ENCODE measurements at regions of chr17 and their contacts with region 1.

Region 1: GRCh38 chr17:80147035-80147836 is at the start of gene EIF4A3:
- DNase-seq: peak in 1 of 2 donors; percentile 99
- H3K4me3 ChIP-seq: peak within 1 kb of the TSS; percentile 69 to 100
- H3K27ac ChIP-seq: peak within 1 kb of the TSS; percentile 99
- H3K4me1 ChIP-seq: peaks cover 40% of the 10 kb centered on the region
- H3K27me3 ChIP-seq: no peaks in the 10 kb centered on the region
- CTCF ChIP-seq: peak in 1 of 3 experiments; percentile 34
- POLR2A ChIP-seq: peak in 1 of 2 donors; percentile 69
- total RNA-seq, gene EIF4A3: 90.1 TPM

Region 2: GRCh38 chr17:80101011-80101945 is 46.0 kb before region 1 on chr17 and contains the start of gene GAA:
- intact Hi-C with region 1: loop called (anchors 2 kb)
- DNase-seq: no peak
- H3K4me3 ChIP-seq: peak within 1 kb of the TSS; percentile 89 to 99
- H3K27ac ChIP-seq: peak within 1 kb of the TSS; percentile 96
- H3K4me1 ChIP-seq: peaks cover 30% of the 10 kb centered on the region
- H3K27me3 ChIP-seq: no peaks in the 10 kb centered on the region
- CTCF ChIP-seq: peak; percentile 86 to 96 (median 86)
- POLR2A ChIP-seq: peak in 1 of 2 donors; percentile 26
- total RNA-seq, gene GAA: 34.1 TPM

Region 3: DNA sequence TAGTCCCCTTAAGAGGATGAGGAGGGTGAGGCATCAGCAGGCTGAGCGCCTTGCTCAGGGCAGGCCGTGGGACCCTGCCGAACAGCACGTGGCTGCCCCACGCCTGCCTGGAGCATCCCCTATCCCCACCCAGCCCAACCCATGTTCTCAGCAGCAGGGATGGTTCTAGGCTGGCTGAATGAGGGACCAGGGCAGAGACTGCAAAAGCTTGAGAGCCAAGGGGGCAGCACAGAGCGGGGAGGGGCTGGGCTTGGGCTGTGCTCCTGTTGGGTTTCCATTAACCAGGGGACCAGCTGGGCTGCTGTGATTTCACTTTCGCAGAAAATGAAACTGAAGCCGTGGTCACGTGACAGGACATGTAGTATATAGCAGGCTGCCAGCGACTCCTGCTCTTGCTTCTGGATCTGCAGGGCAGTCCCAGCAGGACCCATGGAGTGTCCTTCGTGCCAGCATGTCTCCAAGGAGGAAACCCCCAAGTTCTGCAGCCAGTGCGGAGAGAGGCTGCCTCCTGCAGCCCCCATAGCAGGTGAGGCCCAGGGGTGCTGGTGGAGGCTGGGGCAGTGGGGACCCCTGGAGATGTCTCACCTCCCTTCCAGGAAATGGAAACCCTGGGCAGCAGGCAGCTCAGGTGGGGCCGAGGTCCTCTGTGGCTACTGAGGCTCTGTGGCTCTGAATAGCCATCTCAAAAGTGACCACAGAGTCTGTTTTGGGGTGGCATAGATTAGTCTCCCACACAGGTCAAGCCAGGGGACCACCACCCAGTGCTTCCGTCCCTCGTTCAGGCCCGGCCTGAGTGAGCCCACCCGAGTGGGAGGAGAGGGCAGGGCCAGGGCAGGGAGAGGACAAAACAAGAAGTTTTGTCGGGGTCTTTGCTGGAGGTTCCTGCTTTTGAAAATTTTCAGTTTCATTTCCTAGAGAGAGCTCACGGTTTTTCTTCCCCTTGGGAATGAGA is 116.3 kb after region 1 on chr17:
- intact Hi-C with region 1: loop called (anchors 10 kb)
- DNase-seq: no peak
- H3K4me3 ChIP-seq: peak overlapping the region; percentile 37 to 49
- H3K27ac ChIP-seq: peak overlapping the region; percentile 99
- H3K4me1 ChIP-seq: peaks cover 50% of the 10 kb centered on the region
- H3K27me3 ChIP-seq: no peaks in the 10 kb centered on the region
- CTCF ChIP-seq: no peak
- POLR2A ChIP-seq: no peak